Sigmoid colon (tissue), 7 donors: ENCODE measurements at regions of chr16 and their contacts with region 1.

Region 1: DNA sequence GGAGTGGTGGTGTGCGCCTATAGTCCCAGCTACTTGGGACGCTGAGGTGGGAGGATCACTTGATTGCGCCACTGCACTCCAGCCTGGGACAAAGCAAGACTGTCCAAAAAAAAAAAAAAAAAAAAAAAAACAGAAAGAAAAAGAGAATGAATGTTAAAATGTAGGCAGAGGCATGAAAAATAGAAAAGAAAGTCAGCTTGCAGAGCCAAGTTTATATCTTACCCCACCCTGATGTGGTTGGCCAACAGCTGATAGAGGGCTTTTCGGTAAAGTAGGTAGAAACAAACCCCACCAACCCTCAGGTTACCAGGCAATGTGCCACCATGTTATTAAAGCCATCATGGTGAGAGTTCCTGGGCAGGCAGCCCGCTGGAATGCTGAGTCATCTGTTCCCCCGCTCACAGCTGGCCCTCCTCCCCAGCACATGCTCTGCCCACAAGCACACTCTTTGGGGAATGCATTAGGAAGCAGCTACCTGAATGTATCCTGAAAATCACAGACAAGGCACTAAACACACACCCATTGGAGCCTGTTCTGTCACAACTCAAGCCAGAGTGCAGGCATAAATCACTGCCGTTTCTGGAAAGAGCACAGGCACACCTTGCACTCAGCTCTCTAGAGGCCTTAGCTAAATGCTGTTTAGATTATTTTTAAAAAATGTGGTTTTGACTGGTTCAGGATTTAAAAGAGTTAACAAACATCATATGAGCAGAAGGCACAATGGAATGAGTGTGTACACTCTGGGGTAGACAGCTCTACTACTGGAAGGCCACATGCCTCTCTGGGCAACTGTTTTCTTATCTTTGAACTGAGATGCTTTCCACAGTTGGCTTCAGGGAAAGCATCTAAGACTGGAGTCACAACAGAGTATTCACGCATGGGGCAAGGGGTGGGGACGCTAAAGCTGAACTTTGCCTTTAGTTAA is 128.5 kb downstream of the PARN start:
- DNase-seq: peak; percentile 97
- H3K4me3 ChIP-seq: no peak overlapping the region
- H3K27ac ChIP-seq: peak overlapping the region; percentile 68 to 83 (median 77)
- H3K4me1 ChIP-seq: peaks cover 0 to 49% (median 36%) of the 10 kb centered on the region in 4 donors
- H3K27me3 ChIP-seq: no peaks in the 10 kb centered on the region
- CTCF ChIP-seq: no peak
- EP300 ChIP-seq: peak in 2 of 4 donors; percentile 29 to 62
- POLR2A ChIP-seq: no peak

Region 2: DNA sequence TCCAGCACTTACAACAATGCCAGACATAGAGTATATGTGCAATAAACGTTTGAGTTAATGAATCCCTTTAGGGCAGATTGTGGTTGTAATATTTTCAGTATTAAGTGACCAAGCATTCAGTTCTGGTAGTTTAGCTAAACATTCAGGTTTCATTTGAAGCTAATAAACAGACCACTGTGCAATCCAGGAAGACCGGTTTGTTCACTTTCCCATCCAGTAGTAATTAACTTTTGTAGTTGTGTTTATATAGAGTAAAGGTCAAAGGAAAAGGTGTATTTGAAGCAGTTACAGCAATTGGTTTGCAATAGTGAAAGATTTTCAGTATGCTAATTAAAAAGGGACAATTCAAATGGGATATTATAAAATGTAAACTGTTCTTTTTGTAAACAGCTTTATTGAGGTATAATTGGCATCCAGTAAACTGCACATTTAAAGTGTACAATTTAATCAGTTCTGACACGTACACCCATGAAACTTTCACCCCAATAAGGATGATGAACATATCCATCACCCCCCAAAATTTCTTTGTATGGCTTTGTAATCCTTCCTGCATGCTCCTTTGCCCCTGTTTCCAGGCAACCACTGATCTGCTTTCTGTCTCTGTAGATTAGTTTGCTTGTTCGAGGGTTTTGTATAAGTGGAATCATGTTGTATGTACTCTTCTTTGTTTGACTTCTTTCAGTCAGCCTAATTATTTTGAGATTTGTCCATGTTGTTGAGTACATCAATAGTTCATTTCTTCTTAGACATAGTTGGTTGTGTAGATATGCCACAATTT is 404.2 kb before region 1 on chr16:
- intact Hi-C with region 1: loop called (anchors 10 kb)
- DNase-seq: no peak
- H3K4me3 ChIP-seq: no peak overlapping the region
- H3K27ac ChIP-seq: peak overlapping the region in 3 of 4 donors; percentile 33 to 47 (median 34)
- H3K4me1 ChIP-seq: peaks cover 0 to 67% (median 48%) of the 10 kb centered on the region in 4 donors
- H3K27me3 ChIP-seq: no peaks in the 10 kb centered on the region
- CTCF ChIP-seq: no peak
- EP300 ChIP-seq: no peak
- POLR2A ChIP-seq: no peak

Region 3: GRCh38 chr16:14559809-14560241 is 58.2 kb after region 1 on chr16:
- intact Hi-C with region 1: no loop called
- DNase-seq: no peak
- H3K4me3 ChIP-seq: no peak overlapping the region
- H3K27ac ChIP-seq: no peak overlapping the region
- H3K4me1 ChIP-seq: peaks cover 0 to 26% (median 14%) of the 10 kb centered on the region in 4 donors
- H3K27me3 ChIP-seq: no peaks in the 10 kb centered on the region
- CTCF ChIP-seq: no peak
- EP300 ChIP-seq: no peak
- POLR2A ChIP-seq: no peak

Region 4: DNA sequence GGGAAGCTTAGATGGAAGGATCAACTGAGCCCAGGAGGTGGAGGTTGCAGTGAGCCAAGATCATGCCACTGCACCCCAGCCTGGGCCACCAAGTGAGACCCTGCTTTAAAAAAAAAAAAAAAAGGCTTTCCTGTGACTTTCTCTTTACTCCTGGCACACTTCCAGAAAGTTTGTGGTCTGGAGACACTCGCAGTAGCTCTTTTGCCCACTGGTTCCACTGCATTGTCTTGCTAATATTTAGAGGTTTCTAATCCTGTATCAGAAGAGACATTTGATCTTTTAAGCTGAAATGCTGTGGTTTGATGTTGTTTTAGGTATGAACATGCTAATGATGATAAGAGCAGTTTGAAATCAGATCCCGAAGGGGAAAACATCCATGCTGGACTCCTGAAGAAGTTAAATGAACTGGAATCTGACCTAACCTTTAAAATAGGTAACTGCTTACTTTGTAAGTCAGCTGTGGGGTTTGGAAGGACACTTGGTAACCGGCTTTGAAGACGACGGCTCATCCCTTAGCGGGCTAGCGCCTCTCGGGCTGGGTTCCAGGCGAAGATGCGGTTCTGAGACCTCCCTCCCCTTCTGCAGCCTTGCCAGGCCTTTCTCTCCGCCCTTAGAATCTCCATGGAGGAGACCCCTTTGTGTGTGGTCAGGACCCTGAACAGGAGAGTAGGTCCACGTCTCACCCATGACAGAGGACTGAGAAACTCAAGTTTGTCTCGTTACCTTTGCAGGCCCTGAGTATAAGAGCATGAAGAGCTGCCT is 531.1 kb after region 1 on chr16:
- intact Hi-C with region 1: no loop called
- DNase-seq: no peak
- H3K4me3 ChIP-seq: no peak overlapping the region
- H3K27ac ChIP-seq: no peak overlapping the region
- H3K4me1 ChIP-seq: peaks cover 0 to 19% (median 9%) of the 10 kb centered on the region in 4 donors
- H3K27me3 ChIP-seq: no peaks in the 10 kb centered on the region
- CTCF ChIP-seq: no peak
- EP300 ChIP-seq: no peak
- POLR2A ChIP-seq: no peak